ENCODE measurements at regions of chr16 and their contacts with region 1.

Region 1: DNA sequence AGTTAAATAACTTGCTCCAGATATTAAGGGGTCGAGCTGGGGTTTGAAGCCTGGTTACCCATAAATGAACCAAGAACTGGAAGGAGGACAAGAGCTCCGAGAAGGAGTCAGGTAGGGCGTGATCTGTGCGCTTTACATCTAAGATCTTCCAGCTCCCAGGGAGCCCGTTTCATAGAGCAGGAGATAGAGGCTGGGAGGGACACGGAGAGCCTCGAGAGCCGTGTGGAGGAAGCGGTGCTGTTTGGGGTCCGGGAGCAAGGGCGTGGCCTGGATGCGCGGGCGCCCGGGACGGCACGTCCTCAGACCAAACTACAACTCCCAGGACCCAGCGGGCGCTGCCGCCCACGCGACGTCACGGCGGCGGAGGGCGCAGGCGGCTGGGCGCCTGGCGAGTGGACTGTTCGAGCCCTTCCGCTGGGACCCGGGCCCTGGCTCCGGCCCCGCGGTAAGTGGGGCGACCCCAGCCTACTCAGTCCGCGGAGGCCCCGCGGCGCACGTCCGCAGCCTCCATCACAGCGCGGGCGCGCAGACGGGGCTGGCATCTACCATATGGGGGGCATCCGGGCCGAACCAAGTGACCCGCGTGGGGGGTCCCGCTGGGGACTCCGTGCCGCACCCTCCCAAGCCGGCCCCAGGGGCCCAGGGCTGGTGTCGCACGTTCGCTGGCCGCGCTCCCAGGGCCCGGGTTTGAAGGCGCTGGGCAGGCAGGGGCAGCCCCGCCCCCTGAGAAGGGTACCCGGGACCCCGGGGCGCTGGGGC is at the start of gene BCKDK:
- DNase-seq: peak; percentile 86 to 92 (median 88)
- ATAC-seq: peak; percentile 96
- H3K4me3 ChIP-seq: peak within 1 kb of the TSS; percentile 98
- H3K27ac ChIP-seq: peak within 1 kb of the TSS; percentile 61
- H3K4me1 ChIP-seq: peaks cover 8 to 36% of the 10 kb centered on the region in 2 experiments
- H3K27me3 ChIP-seq: no peaks in the 10 kb centered on the region
- CTCF ChIP-seq: no peak
- EP300 ChIP-seq: no peak
- POLR2A ChIP-seq: peak; percentile 63
- RAD21 ChIP-seq: no peak
- polyA plus RNA-seq, gene BCKDK: 0.58 to 1.5 TPM

Region 2: DNA sequence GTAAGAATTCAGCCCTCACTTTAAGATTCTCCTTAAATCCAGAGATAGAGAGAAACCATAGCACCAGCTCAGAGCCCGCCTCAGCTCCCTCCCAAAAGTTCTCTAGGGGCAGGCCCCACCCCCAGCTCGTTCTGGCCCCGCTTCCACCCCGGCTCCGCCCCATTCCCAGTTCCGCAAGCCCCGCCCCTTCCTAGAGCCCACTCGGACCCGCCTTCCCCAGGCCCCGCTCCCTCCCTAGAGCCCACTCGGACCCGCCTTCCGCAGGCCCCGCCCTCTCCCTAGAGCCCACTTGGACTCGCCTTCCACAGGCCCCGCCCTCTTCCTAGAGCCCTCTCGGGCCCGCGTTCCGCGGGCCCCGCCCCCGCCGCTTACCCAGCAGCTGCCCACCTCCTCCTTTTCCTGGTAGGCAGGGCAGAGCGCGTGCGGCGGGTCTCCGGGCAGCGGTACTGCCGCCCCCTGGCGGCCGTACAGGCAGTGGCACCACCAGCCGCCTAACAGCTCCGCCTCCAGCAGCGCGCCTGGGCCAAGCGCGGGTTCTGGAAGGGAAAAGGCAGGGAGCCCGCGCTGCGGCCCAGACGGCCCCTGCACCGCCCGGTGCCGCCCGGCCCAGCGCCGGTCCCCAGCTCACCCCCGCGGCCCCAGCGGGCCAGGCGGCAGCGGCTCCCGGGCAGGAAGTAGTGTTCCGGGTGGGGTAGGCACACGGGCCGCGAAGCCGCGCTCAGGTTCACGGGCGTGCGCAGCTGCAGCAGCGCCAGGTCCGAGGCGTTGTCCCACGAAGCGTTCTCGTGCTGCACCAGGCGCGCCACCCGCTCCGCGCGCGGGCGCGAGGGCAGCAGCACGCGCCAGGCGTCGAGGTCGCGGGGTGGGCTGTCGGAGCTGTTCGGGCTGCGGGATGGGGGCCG is 34.1 kb after region 1 on chr16:
- CTCF ChIA-PET with region 1: no interaction called
- POLR2A ChIA-PET with region 1: no interaction called
- in situ Hi-C with region 1: no loop called
- intact Hi-C with region 1: loop called (anchors 5 kb)
- DNase-seq: peak; percentile 99 to 100 (median 100)
- ATAC-seq: peak; percentile 97
- H3K4me3 ChIP-seq: peak overlapping the region; percentile 28
- H3K27ac ChIP-seq: peak overlapping the region; percentile 67
- H3K4me1 ChIP-seq: peaks cover 14 to 43% of the 10 kb centered on the region in 2 experiments
- H3K27me3 ChIP-seq: peaks cover 13 to 19% of the 10 kb centered on the region in 2 experiments; a peak in 4 of 5 replicates
- CTCF ChIP-seq: peak; percentile 89 to 95 (median 93)
- EP300 ChIP-seq: no peak
- POLR2A ChIP-seq: peak; percentile 65
- RAD21 ChIP-seq: peak; percentile 91 to 94